Left ventricle myocardium superior (tissue), 1 donor: ENCODE measurements at regions of chr14 and their contacts with region 1.

Region 1: GRCh38 chr14:33676135-33676566 is 274.7 kb downstream of the EGLN3 start:
- DNase-seq: peak; percentile 37
- ATAC-seq: peak; percentile 74

Region 2: DNA sequence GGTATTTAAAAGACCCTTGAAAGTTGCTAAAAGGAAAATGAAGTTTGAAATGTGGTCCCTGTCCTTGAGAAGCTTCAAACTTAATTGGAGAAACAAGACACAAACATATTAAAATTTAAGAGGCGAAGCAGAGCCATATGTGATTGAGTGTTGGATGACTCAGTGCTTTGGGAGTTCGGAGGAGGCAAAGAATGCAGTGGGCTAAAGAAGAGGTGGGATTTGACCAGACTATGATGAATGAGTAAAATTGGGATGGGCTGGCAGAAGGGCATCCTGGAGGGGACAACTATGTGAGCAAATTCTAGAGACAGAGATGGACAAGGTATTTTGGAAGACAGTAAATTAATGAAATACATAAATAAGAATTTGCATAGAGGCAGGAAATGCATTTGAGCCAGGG is 83.9 kb before region 1 on chr14:
- intact Hi-C with region 1: no loop called
- DNase-seq: no peak
- ATAC-seq: no peak

Region 3: GRCh38 chr14:33792720-33793368 is 116.7 kb after region 1 on chr14:
- intact Hi-C with region 1: loop called (anchors 10 kb)
- DNase-seq: peak; percentile 87
- ATAC-seq: peak; percentile 94